ENCODE measurements at regions of chr11 and their contacts with region 1.

Region 1: GRCh38 chr11:133078591-133079404 is 453.5 kb downstream of the OPCML start:
- DNase-seq: peak in 1 of 2 experiments; percentile 29
- H3K4me3 ChIP-seq: no peak overlapping the region
- H3K27ac ChIP-seq: no peak overlapping the region
- H3K4me1 ChIP-seq: no peaks in the 10 kb centered on the region
- H3K27me3 ChIP-seq: peaks cover 51% of the 10 kb centered on the region
- CTCF ChIP-seq: peak; percentile 82

Region 2: DNA sequence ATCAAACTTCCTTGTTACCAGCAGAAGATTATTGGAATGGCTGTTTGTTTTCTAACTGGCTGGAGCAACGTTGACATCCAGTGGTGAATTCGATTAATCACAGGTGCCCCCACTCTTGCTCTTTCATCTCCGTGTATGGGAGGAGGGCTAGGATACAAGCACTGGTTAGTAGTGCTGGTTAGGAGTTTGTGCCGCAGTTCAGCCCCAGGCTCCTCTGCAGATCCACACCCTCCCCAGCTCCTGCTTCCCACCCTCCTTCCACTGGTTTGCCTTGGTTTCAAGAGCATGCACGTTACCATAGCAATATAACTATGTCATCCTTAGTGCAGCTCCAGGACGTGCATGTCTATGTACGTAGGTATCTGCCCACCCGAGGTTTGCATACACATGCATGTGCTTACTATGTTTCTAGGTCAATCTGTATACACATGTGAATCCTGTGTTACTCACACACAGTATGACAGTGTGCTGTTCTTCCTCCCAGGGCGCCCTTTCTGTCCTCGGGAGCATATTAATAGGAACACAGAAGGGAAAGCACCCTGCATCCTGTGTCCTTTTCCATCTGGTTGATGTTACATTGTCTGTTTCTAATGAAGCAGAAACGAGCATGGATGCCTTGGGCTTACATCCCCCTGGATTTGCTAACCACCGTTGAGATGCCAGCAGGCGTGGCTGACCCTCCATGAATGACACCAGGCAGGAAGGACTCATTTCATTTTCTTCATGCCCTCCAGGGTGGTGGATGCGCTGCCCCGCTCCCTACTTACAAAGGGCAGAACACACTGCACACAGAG is 85.8 kb before region 1 on chr11:
- CTCF ChIA-PET with region 1: no interaction called
- POLR2A ChIA-PET with region 1: no interaction called
- intact Hi-C with region 1: no loop called
- DNase-seq: no peak
- H3K4me3 ChIP-seq: no peak overlapping the region
- H3K27ac ChIP-seq: no peak overlapping the region
- H3K4me1 ChIP-seq: no peaks in the 10 kb centered on the region
- H3K27me3 ChIP-seq: peaks cover 23% of the 10 kb centered on the region; the same call in 1 of the 2 replicates
- CTCF ChIP-seq: no peak

Region 3: DNA sequence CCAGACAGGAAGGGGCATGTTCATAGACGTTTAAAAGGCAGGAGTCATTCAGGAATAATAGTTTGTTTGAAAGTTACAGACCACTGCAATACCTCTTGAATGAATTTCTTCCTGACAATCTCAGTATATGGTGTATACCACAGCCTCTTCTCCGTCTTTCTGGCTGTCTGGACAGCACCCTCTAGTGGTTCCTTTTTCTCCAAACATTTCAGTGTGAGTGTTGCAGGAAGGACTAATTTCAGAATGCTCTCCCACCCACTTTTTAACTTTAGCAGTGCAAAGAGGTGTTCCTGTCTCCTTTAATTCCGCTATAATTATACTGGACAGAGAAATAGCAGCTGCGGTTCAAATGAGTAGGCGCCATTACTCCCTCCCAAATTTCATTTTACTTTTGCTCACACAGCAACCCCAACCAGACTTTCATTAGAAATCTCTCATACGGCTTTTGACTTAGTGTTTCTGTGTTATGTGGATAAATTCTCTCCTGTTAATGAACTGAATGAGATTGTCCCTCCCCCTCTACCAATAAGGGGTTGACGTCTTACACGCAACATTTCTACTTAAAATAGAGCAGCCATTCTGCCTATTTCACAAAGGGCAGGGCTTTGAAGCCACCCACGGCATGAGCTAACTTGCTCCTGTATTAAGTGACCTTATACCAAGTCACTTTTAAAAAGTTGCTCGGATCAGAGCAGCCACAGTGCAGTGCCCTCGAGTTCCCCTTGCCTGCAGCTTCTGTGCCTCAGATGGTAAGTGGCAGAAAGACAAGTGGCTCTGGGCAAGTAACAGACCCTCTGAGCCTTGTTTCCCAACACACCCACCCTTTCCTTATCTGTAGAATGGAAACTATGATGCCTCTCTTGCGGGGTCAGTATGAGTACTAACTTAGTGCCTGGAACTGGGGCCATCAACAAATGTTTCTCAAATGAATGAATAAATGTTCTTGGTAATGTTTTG is 84.9 kb after region 1 on chr11:
- CTCF ChIA-PET with region 1: no interaction called
- POLR2A ChIA-PET with region 1: no interaction called
- intact Hi-C with region 1: loop called (anchors 2 kb)
- DNase-seq: peak in 1 of 2 experiments; percentile 45
- H3K4me3 ChIP-seq: no peak overlapping the region
- H3K27ac ChIP-seq: no peak overlapping the region
- H3K4me1 ChIP-seq: no peaks in the 10 kb centered on the region
- H3K27me3 ChIP-seq: peaks cover 55% of the 10 kb centered on the region
- CTCF ChIP-seq: peak; percentile 71

Region 4: GRCh38 chr11:133323346-133323745 is 244.5 kb after region 1 on chr11:
- CTCF ChIA-PET with region 1: no interaction called
- POLR2A ChIA-PET with region 1: no interaction called
- intact Hi-C with region 1: no loop called
- DNase-seq: no peak
- H3K4me3 ChIP-seq: no peak overlapping the region
- H3K27ac ChIP-seq: no peak overlapping the region
- H3K4me1 ChIP-seq: no peaks in the 10 kb centered on the region
- H3K27me3 ChIP-seq: peaks cover 34% of the 10 kb centered on the region
- CTCF ChIP-seq: no peak

Region 5: DNA sequence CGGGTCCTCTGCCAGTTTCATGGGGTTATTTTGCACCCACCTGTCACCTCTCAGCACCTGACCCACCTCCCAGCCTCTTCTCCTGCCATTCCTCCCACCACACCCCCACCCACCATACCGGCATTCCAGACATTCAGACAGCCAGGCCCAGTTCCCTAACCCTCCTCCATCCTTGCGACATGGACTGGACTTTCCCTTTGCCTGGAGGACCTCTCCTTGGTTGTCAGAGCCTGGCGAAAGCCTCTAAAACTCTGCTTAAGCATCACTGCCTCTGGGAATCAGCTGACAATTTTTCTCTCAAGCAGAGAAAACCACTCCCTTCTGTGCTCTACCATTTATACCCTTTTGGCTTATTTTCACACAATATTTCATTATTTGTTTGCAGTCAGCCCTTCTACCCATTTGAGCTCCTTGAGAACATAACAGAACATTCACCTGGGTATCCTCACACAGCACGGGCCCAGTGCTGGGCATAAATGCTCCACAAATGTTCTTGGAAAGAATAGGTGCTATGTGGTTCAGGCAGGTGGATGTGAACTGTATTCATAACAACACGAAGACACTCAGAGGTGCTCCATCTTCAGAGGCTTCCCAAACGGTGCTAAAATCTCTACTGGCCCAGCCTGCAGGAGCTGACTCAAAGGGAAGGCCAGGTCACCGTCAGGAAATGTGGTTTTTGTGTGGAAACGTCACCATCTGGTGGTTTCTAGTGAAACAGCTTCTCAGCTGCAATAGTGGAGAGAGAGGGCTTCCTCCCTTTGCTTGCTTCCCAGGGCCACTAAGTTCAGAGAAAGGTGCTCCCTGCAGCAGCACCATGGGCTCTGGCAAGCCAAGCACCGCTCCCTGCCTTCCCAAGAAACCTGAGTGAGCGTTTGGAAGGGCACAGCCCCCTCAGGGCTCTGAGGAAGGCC is 756.1 kb after region 1 on chr11:
- CTCF ChIA-PET with region 1: interaction called, 3 read pairs
- POLR2A ChIA-PET with region 1: no interaction called
- intact Hi-C with region 1: loop called (anchors 1 kb)
- DNase-seq: peak; percentile 40 to 49
- H3K4me3 ChIP-seq: no peak overlapping the region
- H3K27ac ChIP-seq: no peak overlapping the region
- H3K4me1 ChIP-seq: no peaks in the 10 kb centered on the region
- H3K27me3 ChIP-seq: no peaks in the 10 kb centered on the region
- CTCF ChIP-seq: peak; percentile 76